Dorsolateral prefrontal cortex (tissue), 120 donors: ENCODE measurements at regions of chr15 and their contacts with region 1.

Region 1: DNA sequence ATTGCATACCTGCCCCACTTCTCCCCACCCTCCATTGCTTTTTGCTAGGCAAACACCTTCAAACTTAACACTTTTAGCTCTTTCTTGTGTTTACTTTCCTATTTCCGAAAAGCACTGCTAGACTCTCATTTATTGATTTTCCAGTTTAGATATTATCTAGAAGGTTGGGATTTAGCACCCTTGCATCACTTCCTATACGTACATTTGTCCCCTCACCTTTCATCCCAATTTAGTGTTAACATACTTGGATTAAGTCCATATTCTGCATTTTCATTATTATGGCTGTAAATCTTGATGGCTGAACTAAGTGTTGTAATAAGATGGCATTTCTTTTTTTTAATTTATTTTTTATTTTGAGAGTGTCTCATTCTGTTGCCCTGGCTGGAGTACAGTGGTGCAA is 39.5 kb downstream of the GOLGA6L10 start:
- DNase-seq: no peak
- H3K4me3 ChIP-seq: no peak overlapping the region
- H3K27ac ChIP-seq: no peak overlapping the region
- H3K27me3 ChIP-seq: no peaks in the 10 kb centered on the region
- CTCF ChIP-seq: no peak

Region 2: DNA sequence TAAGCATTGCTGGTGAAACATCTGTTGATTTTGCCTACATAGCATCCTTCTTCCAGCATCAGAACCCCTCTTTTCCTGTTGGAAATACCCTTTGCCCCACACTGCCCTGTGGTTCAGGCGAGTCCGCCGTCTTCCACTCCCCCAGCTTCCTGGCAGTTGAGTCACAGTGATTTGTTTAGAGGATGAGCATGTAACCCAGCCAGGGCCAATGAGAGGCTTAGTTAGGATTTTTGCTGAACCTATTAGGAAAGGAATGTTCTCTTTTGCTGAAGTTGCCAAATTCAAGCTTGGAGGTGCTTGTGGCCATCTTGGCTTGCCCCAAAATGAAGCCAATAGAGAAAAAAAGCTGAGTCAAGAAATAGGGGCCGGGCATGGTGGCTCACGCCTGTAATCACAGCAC is 245.0 kb before region 1 on chr15:
- intact Hi-C with region 1: no loop called
- DNase-seq: no peak
- H3K4me3 ChIP-seq: no peak overlapping the region
- H3K27ac ChIP-seq: no peak overlapping the region
- H3K27me3 ChIP-seq: peaks cover 0 to 50% (median 17%) of the 10 kb centered on the region in 45 donors
- CTCF ChIP-seq: no peak

Region 3: DNA sequence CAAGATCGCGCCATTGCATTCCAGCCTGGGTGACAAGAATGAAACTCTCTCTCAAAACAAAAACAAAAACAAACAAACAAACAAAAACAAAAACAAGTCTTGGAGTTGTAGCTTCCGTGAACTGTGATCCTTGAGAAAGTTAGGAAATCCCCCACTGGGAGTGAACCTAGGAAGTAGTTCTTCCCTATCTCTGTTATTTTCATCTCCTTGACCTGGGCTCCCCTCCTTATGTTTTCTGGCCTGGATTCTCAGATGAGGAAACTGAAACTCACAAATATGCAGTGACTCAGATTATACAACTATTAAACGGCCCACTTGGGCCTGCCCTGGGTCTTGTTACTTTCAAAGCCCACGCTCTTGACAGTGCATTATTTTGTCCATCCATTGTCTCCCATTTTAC is 17.5 kb before region 1 on chr15:
- intact Hi-C with region 1: loop called in 1 of 2 experiments (anchors 1 kb)
- DNase-seq: no peak
- H3K4me3 ChIP-seq: no peak overlapping the region
- H3K27ac ChIP-seq: no peak overlapping the region
- H3K27me3 ChIP-seq: no peaks in the 10 kb centered on the region
- CTCF ChIP-seq: no peak

Region 4: DNA sequence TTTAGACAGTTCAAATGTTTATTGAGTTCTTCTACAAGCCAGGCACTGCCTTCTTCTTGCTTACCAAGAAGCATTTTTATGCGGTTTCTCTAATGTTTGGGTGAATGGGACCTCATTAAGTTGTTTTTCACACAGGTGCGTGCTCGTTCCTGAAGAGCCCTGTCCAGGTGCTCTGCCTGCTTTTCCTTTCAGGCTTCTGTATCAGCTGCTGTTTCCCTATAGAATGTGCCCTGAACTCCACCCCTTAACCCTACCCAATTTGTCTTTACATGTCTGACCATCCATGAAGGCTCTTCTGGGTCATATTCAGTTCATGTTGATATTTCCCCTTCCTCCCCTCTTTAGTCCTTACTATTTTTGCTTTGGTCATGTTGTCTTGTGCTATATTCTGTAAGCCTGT is 61.9 kb after region 1 on chr15:
- intact Hi-C with region 1: no loop called
- DNase-seq: no peak
- H3K4me3 ChIP-seq: no peak overlapping the region
- H3K27ac ChIP-seq: no peak overlapping the region
- H3K27me3 ChIP-seq: no peaks in the 10 kb centered on the region
- CTCF ChIP-seq: no peak